ENCODE measurements at regions of chr1 and their contacts with region 1.

Region 1: DNA sequence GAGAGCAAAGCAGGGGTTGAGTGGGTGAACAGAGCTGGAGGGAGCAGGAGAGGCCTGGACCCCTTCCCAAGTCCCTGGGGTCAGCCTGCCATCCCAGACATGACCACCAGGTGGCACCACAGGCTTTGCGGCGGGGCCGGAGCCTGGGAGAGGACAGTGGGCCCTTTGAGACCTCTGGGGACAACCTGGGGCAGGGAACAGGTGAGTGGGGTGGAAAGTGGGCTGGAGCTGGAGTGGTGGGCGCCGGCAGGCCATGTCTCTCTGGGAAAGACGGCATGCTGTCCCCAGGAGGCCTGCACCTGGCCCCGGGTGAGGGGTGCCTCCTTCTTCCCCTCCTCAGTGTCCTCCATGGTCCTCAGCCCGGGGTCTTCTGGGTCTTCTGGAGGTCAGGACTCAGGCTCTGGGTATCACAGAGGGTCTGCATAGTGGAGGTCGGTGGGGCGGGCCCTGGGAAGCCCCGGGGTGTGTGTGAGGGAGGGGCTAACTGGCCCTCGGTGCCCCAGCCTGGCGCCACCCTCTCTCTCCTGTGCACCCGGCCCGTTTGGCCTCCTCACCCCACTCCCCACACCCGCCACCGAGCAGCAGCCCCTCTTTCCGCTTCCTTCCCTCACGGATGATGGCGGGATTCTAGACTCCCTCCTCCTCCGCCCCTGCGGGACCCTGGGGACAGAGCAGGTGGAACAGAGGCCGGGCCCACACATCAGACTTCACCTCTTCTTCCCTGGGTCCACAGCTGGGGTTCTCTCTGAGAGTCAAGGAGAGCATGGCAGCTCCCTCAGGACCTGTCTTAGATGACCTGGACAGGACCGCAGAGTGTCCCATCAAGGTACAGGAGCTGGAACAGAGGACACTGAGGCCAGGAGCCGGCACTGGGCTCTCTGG is 28.4 kb upstream of the PKP1 start:
- DNase-seq: peak; percentile 84
- ATAC-seq: peak; percentile 86
- H3K4me3 ChIP-seq: no peak overlapping the region
- H3K27ac ChIP-seq: no peak overlapping the region
- H3K4me1 ChIP-seq: peaks cover 7% of the 10 kb centered on the region
- H3K27me3 ChIP-seq: peaks cover 3% of the 10 kb centered on the region
- CTCF ChIP-seq: peak; percentile 97

Region 2: DNA sequence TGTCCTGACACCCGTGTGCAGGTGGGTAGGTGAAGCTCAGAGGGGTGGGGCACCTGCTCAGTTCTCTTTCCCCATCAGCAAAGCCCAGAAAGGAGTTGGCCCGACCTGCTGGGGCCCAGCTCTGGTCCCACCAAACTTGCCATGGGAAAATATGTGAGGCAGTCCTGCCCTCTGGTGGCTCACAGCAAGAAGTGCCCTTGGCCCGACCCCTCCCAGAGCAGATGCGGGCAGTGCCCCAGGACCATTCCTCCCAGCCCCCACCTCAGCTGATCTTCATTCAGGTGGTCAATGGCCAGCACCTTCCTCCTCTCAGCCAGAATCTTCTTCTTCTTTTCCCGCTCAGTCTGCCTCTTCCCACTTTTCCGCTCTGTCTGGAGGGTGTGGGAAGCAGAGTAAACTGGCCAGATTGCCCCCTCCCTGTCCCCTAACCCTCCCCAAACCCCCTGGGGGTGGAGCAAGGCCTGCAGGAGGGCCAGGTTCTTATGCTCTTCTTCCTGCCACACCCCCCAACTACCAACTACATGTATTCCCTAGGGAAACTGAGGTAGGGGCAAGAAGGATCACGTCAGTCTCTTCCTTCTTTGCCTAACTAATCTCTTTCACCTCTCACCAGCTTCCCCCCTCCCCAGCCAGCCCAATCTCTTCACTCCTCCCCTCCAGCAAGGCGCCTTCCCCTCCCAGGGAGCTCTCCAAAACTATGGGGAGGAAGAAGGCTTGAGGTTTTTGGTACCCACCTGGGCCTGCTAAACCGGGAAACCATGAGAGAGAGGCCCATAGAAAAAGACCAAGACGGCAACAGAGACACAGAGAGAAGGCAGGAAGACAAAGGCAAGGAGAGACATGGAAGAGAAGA is 107.0 kb after region 1 on chr1:
- intact Hi-C with region 1: loop called (anchors 5 kb)
- DNase-seq: peak; percentile 68
- ATAC-seq: peak; percentile 63
- H3K4me3 ChIP-seq: no peak overlapping the region
- H3K27ac ChIP-seq: no peak overlapping the region
- H3K4me1 ChIP-seq: no peaks in the 10 kb centered on the region
- H3K27me3 ChIP-seq: no peaks in the 10 kb centered on the region
- CTCF ChIP-seq: peak; percentile 80

Region 3: GRCh38 chr1:201385299-201385891 is 130.5 kb after region 1 on chr1:
- intact Hi-C with region 1: no loop called
- DNase-seq: peak; percentile 84
- ATAC-seq: peak; percentile 83
- H3K4me3 ChIP-seq: no peak overlapping the region
- H3K27ac ChIP-seq: no peak overlapping the region
- H3K4me1 ChIP-seq: peaks cover 5% of the 10 kb centered on the region
- H3K27me3 ChIP-seq: no peaks in the 10 kb centered on the region
- CTCF ChIP-seq: peak; percentile 77

Region 4: GRCh38 chr1:201408176-201408833 is 153.4 kb after region 1 on chr1:
- intact Hi-C with region 1: loop called (anchors 5 kb)
- DNase-seq: peak; percentile 91
- ATAC-seq: peak; percentile 86
- H3K4me3 ChIP-seq: no peak overlapping the region
- H3K27ac ChIP-seq: no peak overlapping the region
- H3K4me1 ChIP-seq: peaks cover 14% of the 10 kb centered on the region
- H3K27me3 ChIP-seq: no peaks in the 10 kb centered on the region
- CTCF ChIP-seq: peak; percentile 96

Measured in upper lobe of right lung (tissue), 1 donor.